ENCODE measurements at regions of chr6 and their contacts with region 1.

Region 1: GRCh38 chr6:16761471-16762267 is 409 bp upstream of the ATXN1 start:
- DNase-seq: peak; percentile 77

Region 2: DNA sequence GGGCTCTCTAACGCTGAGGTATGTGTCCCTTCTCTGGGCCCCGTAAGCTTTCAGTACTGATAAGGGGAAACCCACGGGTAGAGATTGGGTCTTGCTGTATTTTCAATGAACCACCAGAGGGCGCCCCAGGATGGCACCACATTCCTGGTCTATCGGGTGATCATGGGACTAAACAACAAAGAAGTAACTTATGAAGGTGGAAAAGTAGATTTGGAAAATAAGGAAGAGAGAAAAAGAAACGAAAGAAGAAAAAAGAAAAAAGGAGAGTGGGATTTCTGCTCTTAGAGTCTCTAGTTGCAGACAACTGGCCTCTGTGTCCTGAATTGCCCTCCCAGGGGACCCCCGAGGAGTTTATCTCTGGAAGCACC is 429.5 kb before region 1 on chr6:
- in situ Hi-C with region 1: loop called (anchors 25 kb)
- DNase-seq: peak; percentile 82

Region 3: DNA sequence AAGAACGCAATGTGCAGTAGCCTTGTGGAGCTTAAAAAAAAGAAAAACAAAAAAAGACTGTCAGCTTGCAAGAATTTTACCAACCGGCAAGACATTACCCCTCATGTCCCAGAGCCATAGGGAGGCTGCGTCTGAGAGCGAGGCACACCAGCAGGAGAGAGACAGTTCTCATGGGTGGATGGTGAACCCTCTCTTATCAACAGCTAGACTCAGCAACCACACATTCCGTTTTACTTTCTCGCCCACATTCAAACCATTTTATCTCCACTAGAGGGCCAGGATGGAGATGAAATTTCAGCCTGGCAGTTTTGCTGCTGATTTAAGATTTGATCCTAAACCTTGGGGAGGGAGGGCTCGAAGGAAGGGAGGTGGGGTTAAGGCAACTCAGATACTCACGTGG is 247.4 kb before region 1 on chr6:
- in situ Hi-C with region 1: loop called (anchors 25 kb)
- DNase-seq: peak; percentile 63

Region 4: DNA sequence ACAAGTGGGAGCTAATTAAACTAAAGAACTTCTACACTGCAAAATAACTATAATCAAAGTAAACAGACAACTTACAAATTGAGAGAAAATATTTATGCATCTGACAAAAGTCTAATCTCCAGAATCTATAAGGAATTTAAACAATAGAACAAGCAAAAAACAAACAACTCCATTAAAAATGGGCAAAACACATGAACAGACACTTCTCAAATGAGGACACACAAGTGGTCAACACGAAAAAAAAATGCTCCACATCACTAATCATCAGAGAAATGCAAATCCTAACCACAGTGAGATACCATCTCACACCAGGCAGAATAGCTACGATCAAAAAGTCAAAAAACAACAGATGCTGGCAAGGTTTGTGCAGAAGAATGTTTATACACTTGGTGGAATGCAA is 376.4 kb after region 1 on chr6:
- in situ Hi-C with region 1: no loop called
- DNase-seq: no peak

Measured in KBM-7 (cell line).